Psoas muscle (tissue), 8 donors: ENCODE measurements at regions of chr11 and their contacts with region 1.

Region 1: GRCh38 chr11:59171508-59172322 is at the start of gene DTX4:
- DNase-seq: peak; percentile 90 to 95
- ATAC-seq: peak; percentile 94 to 99 (median 98)
- H3K4me3 ChIP-seq: peak within 1 kb of the TSS; percentile 72
- H3K27ac ChIP-seq: no peak within 1 kb of the TSS
- H3K4me1 ChIP-seq: no peaks in the 10 kb centered on the region
- H3K27me3 ChIP-seq: peaks cover 0 to 27% (median 4%) of the 10 kb centered on the region in 3 donors
- CTCF ChIP-seq: peak; percentile 87
- total RNA-seq, gene DTX4: 1.2 to 2.7 (median 2.3) TPM

Region 2: DNA sequence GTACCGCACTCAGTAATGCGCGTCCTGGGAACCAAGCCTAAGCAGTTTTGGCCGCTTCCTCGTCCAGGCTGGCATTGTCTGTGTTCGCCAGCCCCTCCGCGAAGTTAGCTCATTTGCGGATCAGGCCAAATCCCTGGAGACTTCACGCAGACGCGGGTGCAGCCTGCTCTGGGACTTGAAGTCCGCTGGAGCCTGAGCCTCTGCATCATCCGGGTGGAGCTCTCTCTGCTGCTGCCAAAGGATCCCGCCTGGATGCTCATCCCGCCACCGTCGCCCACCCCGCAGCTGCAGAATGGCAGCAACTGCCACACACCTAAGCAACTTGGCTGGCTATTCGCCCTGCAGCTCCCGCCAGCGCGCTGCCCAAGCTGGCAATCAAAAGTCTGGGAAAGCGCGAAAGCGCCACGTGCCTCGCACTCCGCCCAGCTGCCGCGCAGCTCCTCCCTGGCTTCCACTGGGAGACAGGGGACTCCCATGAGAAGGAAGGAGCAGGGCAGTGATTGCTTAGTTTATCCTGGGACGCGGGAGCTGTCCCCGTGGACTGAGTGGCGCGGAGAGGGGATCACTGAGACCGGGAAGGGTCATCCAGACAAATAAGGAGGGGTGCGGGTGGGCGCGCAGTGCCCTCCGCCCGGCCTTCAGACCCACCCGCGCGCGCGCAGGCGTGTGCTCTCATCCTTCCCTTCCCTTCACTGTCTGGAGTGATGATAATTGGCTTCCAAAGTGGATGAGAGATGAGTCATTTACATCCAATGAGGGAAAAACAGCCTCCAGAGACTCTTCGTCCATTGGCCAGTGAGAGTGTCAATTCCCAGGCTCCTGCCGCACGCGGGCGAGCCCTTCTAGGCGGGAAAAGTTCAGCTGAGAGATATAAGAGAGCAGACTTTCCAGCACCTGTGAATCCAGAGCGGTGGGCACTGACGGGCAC is 108.8 kb before region 1 on chr11:
- intact Hi-C with region 1: no loop called
- DNase-seq: no peak
- ATAC-seq: no peak
- H3K4me3 ChIP-seq: no peak overlapping the region
- H3K27ac ChIP-seq: no peak overlapping the region
- H3K4me1 ChIP-seq: no peaks in the 10 kb centered on the region
- H3K27me3 ChIP-seq: peaks cover 4 to 45% (median 6%) of the 10 kb centered on the region in 3 donors
- CTCF ChIP-seq: no peak

Region 3: GRCh38 chr11:59088162-59088561 is 83.6 kb before region 1 on chr11:
- intact Hi-C with region 1: no loop called
- DNase-seq: no peak
- ATAC-seq: no peak
- H3K4me3 ChIP-seq: no peak overlapping the region
- H3K27ac ChIP-seq: no peak overlapping the region
- H3K4me1 ChIP-seq: no peaks in the 10 kb centered on the region
- H3K27me3 ChIP-seq: no peaks in the 10 kb centered on the region
- CTCF ChIP-seq: no peak

Region 4: GRCh38 chr11:59207988-59208451 is 36.3 kb after region 1 on chr11:
- intact Hi-C with region 1: loop called (anchors 1 to 5 kb)
- DNase-seq: no peak
- ATAC-seq: peak in 2 of 4 donors; percentile 34 to 63
- H3K4me3 ChIP-seq: peak overlapping the region; percentile 15
- H3K27ac ChIP-seq: no peak overlapping the region
- H3K4me1 ChIP-seq: no peaks in the 10 kb centered on the region
- H3K27me3 ChIP-seq: peaks cover 0 to 7% (median 0%) of the 10 kb centered on the region in 3 donors
- CTCF ChIP-seq: peak; percentile 64

Region 5: DNA sequence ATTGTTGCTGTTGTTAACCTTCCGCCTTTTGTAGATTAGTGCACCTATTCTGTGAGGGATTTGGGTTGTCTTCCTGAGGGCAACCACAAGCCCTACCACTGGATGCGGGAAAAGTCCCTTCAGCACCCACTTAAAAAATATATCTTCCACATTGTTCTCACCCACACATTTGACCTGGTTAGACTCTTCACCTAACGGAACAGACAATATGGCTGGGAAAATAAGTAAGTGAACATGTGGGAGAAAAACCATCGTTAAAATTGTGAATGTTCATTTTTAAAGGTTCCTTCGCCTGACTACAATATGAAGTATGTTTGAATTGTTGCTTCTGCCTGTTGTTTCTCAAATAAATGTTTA is 113.0 kb after region 1 on chr11:
- intact Hi-C with region 1: loop called (anchors 1 to 5 kb)
- DNase-seq: no peak
- ATAC-seq: no peak
- H3K4me3 ChIP-seq: no peak overlapping the region
- H3K27ac ChIP-seq: no peak overlapping the region
- H3K4me1 ChIP-seq: no peaks in the 10 kb centered on the region
- H3K27me3 ChIP-seq: no peaks in the 10 kb centered on the region
- CTCF ChIP-seq: no peak

Region 6: GRCh38 chr11:59429924-59430516 is 258.3 kb after region 1 on chr11:
- intact Hi-C with region 1: loop called in 1 of 2 experiments (anchors 10 kb)
- DNase-seq: no peak
- ATAC-seq: no peak
- H3K4me3 ChIP-seq: no peak overlapping the region
- H3K27ac ChIP-seq: no peak overlapping the region
- H3K4me1 ChIP-seq: no peaks in the 10 kb centered on the region
- H3K27me3 ChIP-seq: no peaks in the 10 kb centered on the region
- CTCF ChIP-seq: peak; percentile 45